ENCODE measurements at regions of chr5 and their contacts with region 1.

Region 1: GRCh38 chr5:145681686-145682085 is 153.5 kb downstream of the PRELID2 start:
- DNase-seq: peak in 3 of 10 donors; percentile 4 to 63 (median 49)
- H3K4me3 ChIP-seq: no peak overlapping the region
- H3K27ac ChIP-seq: no peak overlapping the region
- H3K27me3 ChIP-seq: no peaks in the 10 kb centered on the region
- CTCF ChIP-seq: peak; percentile 45 to 86 (median 72)

Region 2: DNA sequence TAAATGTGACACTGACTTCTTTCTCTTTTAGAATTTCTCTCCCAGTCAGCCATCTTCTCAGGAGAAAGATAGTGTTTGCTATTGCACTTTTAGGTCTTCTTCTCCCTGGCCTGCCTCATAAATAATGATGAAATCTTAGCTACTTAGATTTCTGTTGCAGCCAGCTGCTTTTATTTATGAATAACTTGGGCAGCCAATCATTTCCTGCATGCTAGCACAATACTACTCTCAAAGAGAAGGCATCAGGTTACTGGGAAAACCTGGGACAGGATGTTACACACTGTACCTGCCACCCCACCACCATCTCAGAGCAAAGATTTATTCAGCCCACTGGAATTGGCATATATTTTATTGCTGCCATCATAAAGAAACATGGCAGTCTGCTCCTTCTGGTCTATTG is 113.1 kb before region 1 on chr5:
- intact Hi-C with region 1: no loop called
- DNase-seq: no peak
- H3K4me3 ChIP-seq: no peak overlapping the region
- H3K27ac ChIP-seq: no peak overlapping the region
- H3K27me3 ChIP-seq: no peaks in the 10 kb centered on the region
- CTCF ChIP-seq: no peak

Region 3: GRCh38 chr5:145579301-145579700 is 102.4 kb before region 1 on chr5:
- intact Hi-C with region 1: no loop called
- DNase-seq: no peak
- H3K4me3 ChIP-seq: no peak overlapping the region
- H3K27ac ChIP-seq: no peak overlapping the region
- H3K27me3 ChIP-seq: peaks cover 0 to 2% (median 0%) of the 10 kb centered on the region in 45 donors
- CTCF ChIP-seq: no peak

Region 4: GRCh38 chr5:145811834-145812625 is 130.3 kb after region 1 on chr5:
- intact Hi-C with region 1: loop called in 1 of 2 experiments (anchors 2 kb)
- DNase-seq: peak in 3 of 10 donors; percentile 15 to 76 (median 37)
- H3K4me3 ChIP-seq: no peak overlapping the region
- H3K27ac ChIP-seq: peak overlapping the region in 3 of 59 donors; percentile 16 to 29 (median 26)
- H3K27me3 ChIP-seq: no peaks in the 10 kb centered on the region
- CTCF ChIP-seq: peak in 55 of 56 donors; percentile 17 to 75 (median 54)

Region 5: GRCh38 chr5:146130440-146131045 is 448.9 kb after region 1 on chr5:
- intact Hi-C with region 1: loop called in 1 of 2 experiments (anchors 5 kb)
- DNase-seq: no peak
- H3K4me3 ChIP-seq: no peak overlapping the region
- H3K27ac ChIP-seq: peak overlapping the region in 2 of 59 donors; percentile 28 to 54
- H3K27me3 ChIP-seq: no peaks in the 10 kb centered on the region
- CTCF ChIP-seq: peak; percentile 53 to 91 (median 74)